ENCODE measurements at regions of chr5 and their contacts with region 1.

Region 1: GRCh38 chr5:150486402-150487198 is 21.3 kb upstream of the NDST1 start:
- DNase-seq: peak; percentile 74
- ATAC-seq: peak; percentile 11

Region 2: GRCh38 chr5:150464554-150465012 is 22.0 kb before region 1 on chr5:
- intact Hi-C with region 1: loop called (anchors 2 kb)
- DNase-seq: no peak
- ATAC-seq: peak; percentile 71

Region 3: GRCh38 chr5:150498501-150498900 is 11.9 kb after region 1 on chr5:
- intact Hi-C with region 1: loop called (anchors 1 kb)
- DNase-seq: no peak
- ATAC-seq: no peak

Region 4: GRCh38 chr5:150503977-150504620 is 17.5 kb after region 1 on chr5:
- intact Hi-C with region 1: loop called (anchors 2 kb)
- DNase-seq: no peak
- ATAC-seq: peak; percentile 67

Region 5: DNA sequence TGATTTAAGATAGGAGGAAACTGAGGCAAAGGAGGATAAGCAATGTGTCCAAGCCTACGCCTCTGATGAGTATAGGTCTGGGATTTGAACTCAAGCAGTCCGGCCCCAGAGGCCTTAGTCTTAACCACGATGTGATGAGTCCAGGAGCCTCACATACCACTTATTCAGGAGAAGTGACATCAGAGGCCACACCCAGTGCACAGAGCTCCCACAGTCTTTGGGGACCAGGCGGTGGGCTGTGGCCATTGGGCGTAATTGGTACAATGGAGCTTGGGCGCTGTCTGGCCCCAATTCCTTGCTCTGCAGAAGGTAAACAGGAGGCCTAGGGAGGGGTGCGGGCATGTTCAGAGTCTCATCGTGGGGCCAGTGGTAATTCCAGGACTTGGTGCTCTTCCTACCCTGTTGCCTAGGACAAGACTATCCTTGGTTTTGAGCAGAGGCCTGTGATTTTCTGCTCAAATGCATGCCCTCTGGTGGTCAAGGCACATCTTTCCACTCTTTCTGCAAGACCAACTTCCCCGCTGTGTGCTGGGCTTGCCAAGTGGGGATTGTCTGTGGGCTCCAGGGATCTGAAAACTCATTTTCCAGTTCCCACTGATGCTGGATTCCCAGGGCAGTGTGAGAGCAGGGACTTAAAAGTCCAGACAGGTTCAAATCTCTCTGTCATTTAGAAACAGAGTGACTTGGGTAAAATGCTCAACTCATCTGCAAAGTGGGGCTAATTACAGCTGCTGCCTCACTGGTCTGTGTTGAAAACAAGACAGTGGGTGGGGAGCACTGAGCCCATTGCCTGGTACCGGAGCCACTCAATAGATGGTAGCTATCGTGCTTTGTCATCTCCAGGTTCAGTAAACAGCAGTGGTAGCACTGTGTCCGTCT is 37.1 kb after region 1 on chr5:
- intact Hi-C with region 1: loop called (anchors 1 kb)
- DNase-seq: no peak
- ATAC-seq: peak; percentile 43

Region 6: DNA sequence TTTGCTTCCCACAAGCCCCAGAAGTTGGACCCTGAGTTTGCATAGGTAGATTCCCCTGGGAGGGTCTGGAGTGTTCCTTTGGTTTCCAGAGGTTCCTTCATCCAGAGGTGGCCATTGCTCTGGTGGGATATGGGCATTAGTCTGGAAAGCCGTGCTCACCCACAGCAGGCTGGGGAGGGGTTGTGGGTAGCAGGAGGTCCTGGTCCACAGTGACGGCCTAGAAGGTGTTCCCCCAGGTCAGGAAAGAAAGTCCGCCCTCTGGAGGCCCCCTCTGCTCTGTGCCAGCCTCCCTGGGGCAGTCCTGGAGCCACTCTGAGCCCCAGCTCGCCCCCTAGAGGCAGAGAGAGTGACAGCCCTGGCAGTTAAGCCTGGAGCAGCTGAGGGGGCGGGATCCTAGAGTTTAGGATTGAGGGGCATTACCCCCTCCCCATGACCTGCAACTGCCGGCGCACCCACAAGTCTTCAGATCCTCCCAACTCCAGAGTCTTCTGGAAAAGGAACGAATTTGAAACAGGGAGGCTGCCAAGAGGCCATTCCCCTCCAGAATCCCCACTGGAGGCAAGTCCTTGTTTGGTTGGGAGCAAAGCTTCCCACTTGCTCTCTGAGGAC is 58.1 kb after region 1 on chr5:
- intact Hi-C with region 1: loop called (anchors 2 kb)
- DNase-seq: peak; percentile 87
- ATAC-seq: peak; percentile 75

Region 7: GRCh38 chr5:150740992-150741391 is 254.4 kb after region 1 on chr5:
- intact Hi-C with region 1: no loop called
- DNase-seq: no peak
- ATAC-seq: no peak